ENCODE measurements at regions of chr22 and their contacts with region 1.

Region 1: DNA sequence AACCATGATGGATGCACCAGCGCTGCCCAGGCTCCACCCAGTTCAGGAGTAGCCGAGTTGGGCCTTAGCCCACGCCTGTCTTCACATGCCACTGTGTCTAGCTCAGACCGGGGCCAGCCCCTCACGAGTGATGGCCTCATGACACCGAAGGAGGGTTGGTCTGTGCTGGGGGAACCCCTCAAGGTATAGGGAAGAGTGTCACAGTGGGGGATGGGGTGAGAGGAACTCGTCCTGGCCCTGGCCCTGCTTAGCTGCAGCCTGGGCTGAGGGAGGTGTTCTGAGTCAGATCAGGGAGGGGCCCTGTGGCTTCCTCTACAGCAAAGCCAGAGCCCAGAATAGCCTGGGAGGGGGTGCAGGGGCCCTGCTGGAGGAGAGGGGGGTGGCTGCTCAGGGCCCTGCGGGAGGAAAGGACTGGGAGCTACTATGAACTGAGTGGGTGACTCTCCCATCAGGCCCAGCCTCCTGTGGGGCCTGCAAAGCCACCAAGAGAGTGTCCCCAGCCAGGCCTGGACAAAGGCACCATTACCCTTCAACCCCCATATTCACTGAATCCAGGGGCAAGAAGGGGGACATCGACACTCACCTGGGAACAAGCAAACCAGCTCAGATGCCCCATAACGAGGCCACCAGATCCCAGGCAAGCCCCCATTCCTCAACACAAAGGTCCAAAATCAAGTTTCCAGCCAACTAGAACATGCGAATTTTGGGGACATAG is 41.2 kb downstream of the IGLL5 start:
- H3K4me3 ChIP-seq: no peak overlapping the region
- H3K27ac ChIP-seq: no peak overlapping the region
- H3K4me1 ChIP-seq: no peaks in the 10 kb centered on the region
- CTCF ChIP-seq: no peak

Region 2: DNA sequence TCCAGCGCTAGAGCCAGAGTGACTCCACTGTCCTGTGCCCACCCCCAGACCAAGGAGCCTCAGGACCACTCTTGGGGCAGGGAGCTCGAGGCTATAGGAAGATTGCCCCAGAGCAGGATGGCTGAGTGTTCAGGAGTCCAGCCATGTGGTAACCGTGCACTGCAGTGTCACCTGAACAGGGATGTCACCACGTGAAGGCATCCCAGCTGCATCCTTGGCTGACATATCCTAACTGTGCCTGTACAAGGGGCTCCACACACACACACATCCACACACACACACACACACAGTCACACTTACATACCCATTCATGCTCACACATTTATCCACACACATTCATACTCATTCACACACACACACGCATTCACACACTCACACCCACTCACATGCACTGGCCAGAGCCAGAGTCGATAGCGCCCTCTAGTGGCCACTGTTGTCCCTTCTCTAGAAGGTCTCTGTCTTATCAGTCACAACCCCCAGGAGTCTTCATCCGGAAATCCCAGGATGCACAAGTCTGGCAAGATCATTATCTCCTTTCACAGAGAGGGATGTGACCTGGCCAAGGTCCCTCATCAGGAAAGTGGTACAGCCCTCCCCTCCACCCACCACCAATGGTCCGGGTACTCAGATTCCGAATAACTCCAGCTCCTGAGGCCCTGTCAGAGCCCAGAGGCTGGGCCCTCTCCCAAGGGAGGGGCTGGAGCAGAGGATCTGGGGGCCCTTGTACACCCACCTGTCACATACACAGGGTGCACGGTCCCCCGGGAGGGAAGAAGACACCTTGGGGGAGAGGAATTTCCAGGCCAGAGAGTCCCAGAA is 13.9 kb after region 1 on chr22:
- CTCF ChIA-PET with region 1: interaction called, 28 read pairs
- POLR2A ChIA-PET with region 1: no interaction called
- H3K4me3 ChIP-seq: no peak overlapping the region
- H3K27ac ChIP-seq: no peak overlapping the region
- H3K4me1 ChIP-seq: no peaks in the 10 kb centered on the region
- CTCF ChIP-seq: peak; percentile 89

Measured in HEK293 (cell line).